ENCODE measurements at regions of chr11 and their contacts with region 1.

Region 1: DNA sequence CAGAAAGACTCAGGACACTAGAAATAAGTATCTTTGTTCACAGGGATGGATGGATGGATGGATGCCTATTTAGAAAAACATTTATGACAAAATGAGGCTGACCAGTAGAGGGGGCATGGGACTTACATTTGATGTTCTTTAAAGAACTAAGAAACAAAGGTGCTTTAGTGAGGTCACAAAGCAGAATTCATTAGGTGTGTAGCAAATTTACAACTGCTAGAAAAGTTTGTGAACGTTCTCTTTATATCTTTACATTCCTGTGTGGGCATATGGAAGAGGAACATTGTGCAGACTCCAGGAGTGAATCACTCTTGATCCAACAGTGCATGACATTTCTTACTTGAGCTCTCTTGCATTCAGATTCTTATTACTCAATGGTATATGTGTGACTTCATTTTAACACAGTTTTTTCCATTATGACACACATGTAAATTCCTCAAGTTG is 15.8 kb upstream of the SIK2 start:
- DNase-seq: peak; percentile 22 to 55 (median 40)
- H3K4me3 ChIP-seq: no peak overlapping the region
- H3K4me3 Mint-ChIP-seq: no peak overlapping the region
- H3K27ac ChIP-seq: no peak overlapping the region
- H3K27ac Mint-ChIP-seq: no peak overlapping the region
- H3K4me1 ChIP-seq: no peaks in the 10 kb centered on the region
- H3K4me1 Mint-ChIP-seq: no peaks in the 10 kb centered on the region
- H3K27me3 ChIP-seq: no peaks in the 10 kb centered on the region
- H3K27me3 Mint-ChIP-seq: peaks cover 0 to 2% of the 10 kb centered on the region in 2 donors

Region 2: GRCh38 chr11:111777094-111778046 is 191.0 kb after region 1 on chr11:
- CTCF ChIA-PET with region 1: interaction called, 97 read pairs
- POLR2A ChIA-PET with region 1: no interaction called
- DNase-seq: peak in 3 of 5 donors; percentile 1 to 54 (median 48)
- H3K4me3 ChIP-seq: no peak overlapping the region
- H3K4me3 Mint-ChIP-seq: no peak overlapping the region
- H3K27ac ChIP-seq: no peak overlapping the region
- H3K27ac Mint-ChIP-seq: peak overlapping the region in 1 of 8 donors; percentile 64
- H3K4me1 ChIP-seq: no peaks in the 10 kb centered on the region
- H3K4me1 Mint-ChIP-seq: no peaks in the 10 kb centered on the region
- H3K27me3 ChIP-seq: no peaks in the 10 kb centered on the region
- H3K27me3 Mint-ChIP-seq: no peaks in the 10 kb centered on the region

Region 3: GRCh38 chr11:111841370-111842053 is 255.1 kb after region 1 on chr11:
- CTCF ChIA-PET with region 1: interaction called, 10 read pairs
- POLR2A ChIA-PET with region 1: no interaction called
- DNase-seq: peak; percentile 67 to 86 (median 77)
- H3K4me3 ChIP-seq: no peak overlapping the region
- H3K4me3 Mint-ChIP-seq: no peak overlapping the region
- H3K27ac ChIP-seq: no peak overlapping the region
- H3K27ac Mint-ChIP-seq: peak overlapping the region in 1 of 8 donors; percentile 70
- H3K4me1 ChIP-seq: peaks cover 4% of the 10 kb centered on the region
- H3K4me1 Mint-ChIP-seq: peaks cover 3 to 7% (median 7%) of the 10 kb centered on the region in 3 donors
- H3K27me3 ChIP-seq: no peaks in the 10 kb centered on the region
- H3K27me3 Mint-ChIP-seq: no peaks in the 10 kb centered on the region

Measured in CD8-positive, alpha-beta memory T cell (primary cell).